ENCODE measurements at regions of chr15 and their contacts with region 1.

Region 1: DNA sequence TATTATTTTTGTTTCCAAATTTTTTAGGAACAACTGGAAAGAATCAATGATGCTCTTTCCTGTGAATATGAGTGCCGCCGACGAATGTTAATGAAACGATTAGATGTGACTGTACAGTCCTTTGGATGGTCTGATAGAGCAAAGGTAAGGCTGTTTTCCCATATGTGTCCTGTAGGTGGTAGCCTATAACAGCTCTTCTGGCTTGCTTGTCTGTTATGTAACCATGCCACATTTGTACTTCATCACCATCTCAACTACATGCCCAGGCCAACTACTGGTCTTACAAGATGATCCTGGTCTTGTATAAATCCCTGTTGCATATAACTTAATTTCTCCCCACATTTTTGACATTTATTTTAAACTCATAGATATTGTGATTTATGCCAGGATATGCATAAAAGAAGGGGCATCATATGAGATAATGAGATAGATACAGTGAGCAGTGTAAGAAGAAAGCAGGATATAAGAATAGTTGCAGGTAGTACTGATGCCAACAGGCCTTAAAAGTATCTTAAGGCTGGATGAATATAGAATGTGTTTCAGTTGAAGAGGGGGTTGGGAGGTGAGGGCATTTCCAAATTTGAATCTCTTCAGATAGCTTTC is 20.3 kb downstream of the FAM98B start:
- DNase-seq: peak; percentile 29
- H3K4me3 Mint-ChIP-seq: no peak overlapping the region
- H3K27ac Mint-ChIP-seq: peak overlapping the region; percentile 41
- H3K4me1 Mint-ChIP-seq: peaks cover 20% of the 10 kb centered on the region
- H3K27me3 Mint-ChIP-seq: no peaks in the 10 kb centered on the region

Region 2: GRCh38 chr15:37446921-37447320 is 1027.3 kb before region 1 on chr15:
- intact Hi-C with region 1: no loop called
- DNase-seq: no peak
- H3K4me3 Mint-ChIP-seq: no peak overlapping the region
- H3K27ac Mint-ChIP-seq: no peak overlapping the region
- H3K4me1 Mint-ChIP-seq: no peaks in the 10 kb centered on the region
- H3K27me3 Mint-ChIP-seq: no peaks in the 10 kb centered on the region

Region 3: DNA sequence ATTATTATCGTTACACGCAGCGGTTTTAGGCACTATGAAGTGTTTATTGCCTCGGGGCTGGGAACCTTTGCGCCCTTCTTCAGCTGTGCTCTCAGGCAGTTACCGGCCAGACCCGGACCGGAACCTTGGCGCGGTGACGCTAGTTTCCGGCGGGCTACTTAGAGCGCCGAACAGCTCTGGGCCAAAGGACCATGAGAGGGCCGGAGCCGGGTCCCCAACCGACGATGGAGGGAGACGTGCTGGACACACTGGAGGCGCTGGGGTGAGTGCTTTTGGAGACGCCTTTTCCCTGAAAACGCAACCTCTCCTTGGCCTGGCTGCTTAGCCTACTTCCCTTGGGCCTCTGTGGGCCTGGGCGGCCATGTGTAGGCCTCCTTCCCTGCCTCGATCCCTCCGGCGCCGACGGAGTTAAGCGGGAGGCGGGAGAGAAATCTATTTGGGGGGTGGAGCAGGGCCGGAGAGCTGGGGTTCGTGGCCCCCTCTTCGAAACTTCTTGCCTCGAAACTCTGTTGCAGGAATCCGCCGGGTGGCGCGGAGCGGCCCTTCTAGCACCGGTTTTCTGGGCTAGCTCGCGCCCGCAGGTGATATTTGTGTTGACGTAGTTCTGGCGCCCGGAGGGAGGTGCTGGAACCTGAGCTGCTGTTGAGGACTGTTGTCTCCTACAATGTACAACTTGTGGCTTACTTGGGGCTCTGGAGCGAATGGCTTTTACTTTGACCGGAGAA is 20.1 kb before region 1 on chr15 and contains the start of gene FAM98B:
- intact Hi-C with region 1: loop called (anchors 2 kb)
- DNase-seq: peak; percentile 85
- H3K4me3 Mint-ChIP-seq: peak within 1 kb of the TSS; percentile 96
- H3K27ac Mint-ChIP-seq: peak within 1 kb of the TSS; percentile 95
- H3K4me1 Mint-ChIP-seq: peaks cover 22% of the 10 kb centered on the region
- H3K27me3 Mint-ChIP-seq: peaks cover 19% of the 10 kb centered on the region
- total RNA-seq, gene FAM98B: 64.4 and 66.9 TPM in 2 replicates

Region 4: DNA sequence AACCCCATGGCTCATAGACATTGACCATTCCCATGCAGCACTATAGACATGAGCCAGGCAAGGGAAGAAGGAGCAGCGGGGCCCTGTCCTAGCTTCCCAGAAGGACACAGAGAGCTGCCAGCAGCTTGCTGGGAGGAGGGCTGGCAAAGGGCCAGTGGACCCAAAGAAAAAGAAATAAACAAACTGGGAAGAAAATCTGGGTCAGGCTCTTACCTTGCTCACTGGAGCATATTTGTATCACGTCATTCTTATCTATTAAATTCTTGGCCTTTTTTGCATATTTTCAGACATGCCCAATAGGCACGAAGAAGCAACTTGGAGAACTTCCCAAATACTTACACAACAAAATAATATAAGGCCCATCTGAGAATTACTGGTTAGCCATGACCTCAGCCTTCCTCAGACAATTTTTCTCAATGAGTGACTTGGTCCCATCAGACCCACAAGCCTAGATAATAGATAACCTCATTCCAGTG is 62.0 kb after region 1 on chr15:
- intact Hi-C with region 1: no loop called
- DNase-seq: no peak
- H3K4me3 Mint-ChIP-seq: no peak overlapping the region
- H3K27ac Mint-ChIP-seq: peak overlapping the region; percentile 85
- H3K4me1 Mint-ChIP-seq: peaks cover 99% of the 10 kb centered on the region
- H3K27me3 Mint-ChIP-seq: no peaks in the 10 kb centered on the region